Activated CD8-positive, alpha-beta memory T cell treated with anti-CD3 and anti-CD28 coated beads, Interleukin-2, amount 10 ng/mL, durations not matched to agents 7 days and 5 days (primary cell): ENCODE measurements at regions of chr5 and their contacts with region 1.

Region 1: DNA sequence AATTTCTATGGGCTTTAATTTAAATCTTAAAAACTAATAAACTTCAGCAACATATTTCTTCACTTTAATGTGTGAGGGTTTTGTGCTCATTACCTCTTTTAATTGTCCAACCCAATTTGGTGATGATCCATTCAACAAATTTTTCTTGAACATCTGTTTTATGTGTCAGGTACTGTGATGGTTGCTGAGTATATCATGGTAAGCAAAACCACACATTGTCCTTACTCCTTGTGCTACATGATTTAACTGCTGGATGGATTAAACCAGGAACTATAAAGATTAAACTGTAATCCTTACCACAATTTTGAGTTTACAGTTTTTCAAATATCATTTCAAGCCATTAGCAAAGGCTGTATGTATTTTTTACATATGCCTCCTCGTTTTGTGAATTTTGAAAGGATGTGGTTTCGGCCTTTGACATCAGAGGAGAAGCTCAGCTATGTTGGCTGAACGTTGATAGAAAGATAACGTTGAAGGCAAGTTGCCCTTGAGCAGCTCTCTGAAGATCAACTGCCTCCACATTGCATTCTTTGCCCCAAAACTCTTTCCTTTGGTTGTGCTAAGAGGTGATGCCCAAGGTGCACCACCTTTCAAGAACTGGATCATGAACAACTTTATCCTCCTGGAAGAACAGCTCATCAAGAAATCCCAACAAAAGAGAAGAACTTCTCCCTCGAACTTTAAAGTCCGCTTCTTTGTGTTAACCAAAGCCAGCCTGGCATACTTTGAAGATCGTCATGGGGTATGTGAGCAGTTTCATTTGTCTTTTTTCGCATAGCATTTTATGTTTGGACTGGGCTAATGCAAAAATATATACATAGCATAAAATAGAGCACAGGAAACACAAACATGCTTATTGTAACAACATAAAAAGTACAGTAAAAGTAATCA is at the start of gene ITK:
- DNase-seq: peak; percentile 77
- ATAC-seq: peak; percentile 78
- H3K4me3 Mint-ChIP-seq: peak within 1 kb of the TSS; percentile 96
- H3K27ac Mint-ChIP-seq: peak within 1 kb of the TSS; percentile 99
- H3K4me1 Mint-ChIP-seq: peaks cover 47% of the 10 kb centered on the region
- H3K27me3 Mint-ChIP-seq: no peaks in the 10 kb centered on the region
- total RNA-seq, gene ITK: 209 to 215 TPM

Region 2: DNA sequence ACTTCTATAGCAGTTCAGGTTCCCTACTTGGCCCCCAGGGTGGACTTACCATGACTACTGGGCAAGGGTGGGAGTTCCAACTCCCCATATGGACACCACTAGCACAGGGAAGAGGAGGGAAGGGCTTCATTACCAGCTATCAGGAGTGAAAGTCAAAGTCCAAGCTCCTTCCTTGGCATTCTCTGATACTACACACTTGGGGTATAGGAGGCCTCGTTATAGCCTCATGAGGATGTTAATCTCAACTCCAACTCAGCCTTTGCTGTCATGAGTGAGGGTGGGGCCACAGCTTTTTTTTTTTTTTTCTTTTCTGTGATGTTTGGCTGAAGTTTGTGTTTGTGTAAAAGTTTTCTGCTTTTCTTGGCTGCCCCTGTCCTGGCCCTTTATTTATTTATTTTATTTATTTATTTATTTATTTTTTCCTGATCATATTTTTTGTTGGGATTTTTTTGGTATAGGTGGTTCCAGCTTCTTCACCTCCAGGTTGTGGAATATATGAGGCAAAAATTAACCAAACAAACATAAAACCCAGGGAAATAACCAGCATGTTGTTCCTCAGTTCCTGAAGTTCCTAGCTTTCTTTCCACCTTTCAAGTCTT is 23.2 kb before region 1 on chr5:
- CTCF ChIA-PET with region 1: interaction called, 19 read pairs
- DNase-seq: no peak
- ATAC-seq: no peak
- H3K4me3 Mint-ChIP-seq: no peak overlapping the region
- H3K27ac Mint-ChIP-seq: no peak overlapping the region
- H3K4me1 Mint-ChIP-seq: peaks cover 68% of the 10 kb centered on the region
- H3K27me3 Mint-ChIP-seq: no peaks in the 10 kb centered on the region

Region 3: GRCh38 chr5:157384971-157385709 is 204.5 kb after region 1 on chr5:
- CTCF ChIA-PET with region 1: no interaction called
- DNase-seq: no peak
- ATAC-seq: no peak
- H3K4me3 Mint-ChIP-seq: no peak overlapping the region
- H3K27ac Mint-ChIP-seq: no peak overlapping the region
- H3K4me1 Mint-ChIP-seq: peaks cover 30% of the 10 kb centered on the region
- H3K27me3 Mint-ChIP-seq: no peaks in the 10 kb centered on the region